Activated CD4-positive, alpha-beta T cell treated with anti-CD3 and anti-CD28 coated beads for 36 hours (primary cell): ENCODE measurements at regions of chr14 and their contacts with region 1.

Region 1: GRCh38 chr14:20873370-20874177 is 17.6 kb upstream of the RNASE3 start:
- DNase-seq: peak; percentile 92
- ATAC-seq: peak; percentile 97
- H3K4me3 Mint-ChIP-seq: peak overlapping the region; percentile 8
- H3K27ac Mint-ChIP-seq: no peak overlapping the region
- H3K4me1 Mint-ChIP-seq: peaks cover 18% of the 10 kb centered on the region
- H3K27me3 Mint-ChIP-seq: peaks cover 2% of the 10 kb centered on the region

Region 2: DNA sequence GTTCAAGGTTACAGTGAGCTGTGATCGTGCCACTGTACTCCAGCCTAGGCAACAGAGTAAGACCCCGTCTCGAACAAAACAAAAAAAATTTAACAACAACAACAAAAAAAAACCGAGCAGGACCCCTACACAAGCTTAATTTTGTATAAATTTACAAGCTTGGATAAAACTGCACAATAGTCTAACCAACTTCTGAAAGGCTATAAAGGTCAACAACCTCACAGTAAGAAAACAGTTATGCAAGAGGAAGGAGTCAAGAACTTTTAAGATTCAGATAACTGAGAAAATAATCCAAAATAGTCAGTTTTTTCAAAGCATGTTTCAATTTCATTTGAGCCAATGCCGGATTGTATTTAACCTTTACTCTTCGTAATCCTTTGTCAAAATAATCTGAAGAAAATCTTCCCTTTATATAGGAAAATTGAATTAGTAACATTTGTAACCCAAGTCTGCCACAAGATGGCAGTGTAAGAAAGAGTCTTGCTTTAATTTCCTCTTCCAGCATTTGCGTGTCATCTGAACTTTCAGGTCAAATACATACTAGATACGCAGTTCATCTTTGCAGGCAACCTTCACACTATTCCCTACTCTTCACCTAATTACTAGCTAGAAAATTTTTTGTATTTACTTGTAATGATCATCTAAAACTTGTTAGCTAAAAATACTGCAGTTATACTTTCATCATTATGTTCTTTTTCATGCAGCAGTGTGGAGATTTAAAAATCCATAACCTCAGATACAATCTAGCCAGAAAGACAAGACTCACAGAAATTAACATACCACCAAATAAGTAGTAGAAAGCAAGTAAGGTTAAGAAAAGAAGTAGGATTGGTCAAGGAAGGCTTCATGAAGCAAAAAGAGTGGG is 546.3 kb before region 1 on chr14:
- CTCF ChIA-PET with region 1: no interaction called
- POLR2A ChIA-PET with region 1: no interaction called
- intact Hi-C with region 1: loop called in 1 of 2 experiments (anchors 5 kb)
- DNase-seq: no peak
- ATAC-seq: peak; percentile 71
- H3K4me3 Mint-ChIP-seq: no peak overlapping the region
- H3K27ac Mint-ChIP-seq: peak overlapping the region; percentile 44
- H3K4me1 Mint-ChIP-seq: peaks cover 37% of the 10 kb centered on the region
- H3K27me3 Mint-ChIP-seq: no peaks in the 10 kb centered on the region

Region 3: GRCh38 chr14:20697273-20698017 is 176.1 kb before region 1 on chr14:
- CTCF ChIA-PET with region 1: interaction called, 21 read pairs
- POLR2A ChIA-PET with region 1: no interaction called
- intact Hi-C with region 1: loop called (anchors 1 kb)
- DNase-seq: peak; percentile 78
- ATAC-seq: peak; percentile 95
- H3K4me3 Mint-ChIP-seq: no peak overlapping the region
- H3K27ac Mint-ChIP-seq: no peak overlapping the region
- H3K4me1 Mint-ChIP-seq: peaks cover under 1% of the 10 kb centered on the region
- H3K27me3 Mint-ChIP-seq: no peaks in the 10 kb centered on the region

Region 4: DNA sequence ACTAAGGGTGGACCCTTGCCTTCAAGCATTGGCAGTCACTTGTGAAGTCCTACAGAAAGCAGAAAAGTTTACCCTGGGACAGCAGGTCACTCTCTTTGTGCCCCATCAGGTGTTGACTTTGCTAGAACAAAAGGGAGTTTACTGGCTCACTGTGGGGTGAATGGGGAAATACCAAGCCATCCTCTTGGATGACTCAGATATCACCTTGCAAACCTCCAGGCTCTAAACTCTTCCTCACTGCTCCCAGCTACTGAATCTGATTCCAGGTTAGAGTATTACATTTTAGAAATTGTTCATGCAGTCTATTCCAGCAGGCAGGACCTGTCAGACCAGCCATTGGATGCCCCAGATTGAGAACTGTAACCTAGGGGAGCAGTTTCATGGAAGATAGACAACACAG is 112.6 kb before region 1 on chr14:
- CTCF ChIA-PET with region 1: no interaction called
- POLR2A ChIA-PET with region 1: no interaction called
- intact Hi-C with region 1: no loop called
- DNase-seq: no peak
- ATAC-seq: no peak
- H3K4me3 Mint-ChIP-seq: no peak overlapping the region
- H3K27ac Mint-ChIP-seq: no peak overlapping the region
- H3K4me1 Mint-ChIP-seq: no peaks in the 10 kb centered on the region
- H3K27me3 Mint-ChIP-seq: no peaks in the 10 kb centered on the region

Region 5: GRCh38 chr14:20799892-20800544 is 73.6 kb before region 1 on chr14:
- CTCF ChIA-PET with region 1: no interaction called
- POLR2A ChIA-PET with region 1: no interaction called
- intact Hi-C with region 1: no loop called
- DNase-seq: no peak
- ATAC-seq: no peak
- H3K4me3 Mint-ChIP-seq: no peak overlapping the region
- H3K27ac Mint-ChIP-seq: no peak overlapping the region
- H3K4me1 Mint-ChIP-seq: peaks cover 5% of the 10 kb centered on the region
- H3K27me3 Mint-ChIP-seq: no peaks in the 10 kb centered on the region

Region 6: GRCh38 chr14:20818861-20819260 is 54.7 kb before region 1 on chr14:
- CTCF ChIA-PET with region 1: no interaction called
- POLR2A ChIA-PET with region 1: no interaction called
- intact Hi-C with region 1: loop called in 1 of 2 experiments (anchors 5 kb)
- DNase-seq: peak; percentile 25
- ATAC-seq: no peak
- H3K4me3 Mint-ChIP-seq: no peak overlapping the region
- H3K27ac Mint-ChIP-seq: no peak overlapping the region
- H3K4me1 Mint-ChIP-seq: no peaks in the 10 kb centered on the region
- H3K27me3 Mint-ChIP-seq: peaks cover 2% of the 10 kb centered on the region

Region 7: GRCh38 chr14:20934148-20934762 is 60.7 kb after region 1 on chr14:
- CTCF ChIA-PET with region 1: no interaction called
- POLR2A ChIA-PET with region 1: no interaction called
- intact Hi-C with region 1: no loop called
- DNase-seq: peak; percentile 65
- ATAC-seq: no peak
- H3K4me3 Mint-ChIP-seq: no peak overlapping the region
- H3K27ac Mint-ChIP-seq: no peak overlapping the region
- H3K4me1 Mint-ChIP-seq: no peaks in the 10 kb centered on the region
- H3K27me3 Mint-ChIP-seq: no peaks in the 10 kb centered on the region

Region 8: GRCh38 chr14:20956376-20956976 is 82.9 kb after region 1 on chr14:
- CTCF ChIA-PET with region 1: interaction called, 16 read pairs
- POLR2A ChIA-PET with region 1: no interaction called
- intact Hi-C with region 1: no loop called
- DNase-seq: no peak
- ATAC-seq: no peak
- H3K4me3 Mint-ChIP-seq: no peak overlapping the region
- H3K27ac Mint-ChIP-seq: no peak overlapping the region
- H3K4me1 Mint-ChIP-seq: peaks cover 27% of the 10 kb centered on the region
- H3K27me3 Mint-ChIP-seq: peaks cover 8% of the 10 kb centered on the region

Region 9: GRCh38 chr14:21455911-21456667 is 582.5 kb after region 1 on chr14 and contains the start of gene CHD8:
- CTCF ChIA-PET with region 1: no interaction called
- POLR2A ChIA-PET with region 1: no interaction called
- intact Hi-C with region 1: no loop called
- DNase-seq: peak; percentile 100
- ATAC-seq: peak; percentile 99
- H3K4me3 Mint-ChIP-seq: peak within 1 kb of the TSS; percentile 97
- H3K27ac Mint-ChIP-seq: peak within 1 kb of the TSS; percentile 99
- H3K4me1 Mint-ChIP-seq: peaks cover 30% of the 10 kb centered on the region
- H3K27me3 Mint-ChIP-seq: no peaks in the 10 kb centered on the region
- total RNA-seq, gene CHD8: 84.3 to 104 TPM